ENCODE measurements at regions of chr9 and their contacts with region 1.

Region 1: DNA sequence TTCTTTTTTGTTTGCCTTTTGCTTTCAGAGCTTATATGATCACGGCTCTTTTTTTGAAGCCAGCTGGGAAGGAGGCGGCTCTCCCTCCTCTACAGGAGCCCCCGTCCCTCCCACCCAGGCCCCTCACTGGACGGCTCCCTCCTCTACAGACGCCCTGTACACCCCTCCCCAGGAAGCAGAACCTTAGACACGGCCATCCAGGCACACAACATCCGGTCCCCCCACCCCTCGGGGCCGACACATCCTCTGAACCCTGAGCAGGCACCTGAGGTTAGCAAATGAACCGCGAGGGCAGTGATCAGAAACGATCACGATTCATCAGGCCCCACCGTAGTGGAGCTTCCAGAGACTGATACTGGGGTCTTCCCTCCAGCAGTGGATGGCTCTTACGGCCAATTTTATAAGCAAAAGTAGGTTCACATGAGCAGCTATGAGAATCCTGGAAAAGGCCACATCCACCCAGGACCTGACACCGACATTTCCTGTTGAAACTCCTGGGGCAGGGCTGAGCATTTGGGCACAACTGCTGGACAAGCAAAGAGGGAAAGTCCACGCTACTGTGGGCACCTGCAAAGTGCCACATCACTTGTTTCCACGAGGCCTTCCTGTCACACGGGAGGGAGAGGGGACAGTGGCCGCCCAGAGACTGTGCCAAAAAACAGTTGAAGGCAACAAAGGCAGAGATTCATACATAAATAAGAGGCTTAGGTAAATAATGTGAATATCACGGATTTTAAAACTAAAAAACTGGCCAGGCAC is 78.9 kb downstream of the SEMA4D start:
- DNase-seq: peak; percentile 70
- ATAC-seq: peak; percentile 86
- H3K4me3 ChIP-seq: peak overlapping the region in 4 of 5 experiments; percentile 1 to 42 (median 8)
- H3K4me3 Mint-ChIP-seq: peak overlapping the region; percentile 85
- H3K27ac ChIP-seq: peak overlapping the region; percentile 64 to 65
- H3K27ac Mint-ChIP-seq: peak overlapping the region; percentile 92
- H3K4me1 ChIP-seq: peaks cover 44 to 56% of the 10 kb centered on the region in 2 donors
- H3K4me1 Mint-ChIP-seq: peaks cover 68% of the 10 kb centered on the region
- H3K27me3 ChIP-seq: no peaks in the 10 kb centered on the region
- H3K27me3 Mint-ChIP-seq: no peaks in the 10 kb centered on the region
- CTCF ChIP-seq: no peak

Region 2: DNA sequence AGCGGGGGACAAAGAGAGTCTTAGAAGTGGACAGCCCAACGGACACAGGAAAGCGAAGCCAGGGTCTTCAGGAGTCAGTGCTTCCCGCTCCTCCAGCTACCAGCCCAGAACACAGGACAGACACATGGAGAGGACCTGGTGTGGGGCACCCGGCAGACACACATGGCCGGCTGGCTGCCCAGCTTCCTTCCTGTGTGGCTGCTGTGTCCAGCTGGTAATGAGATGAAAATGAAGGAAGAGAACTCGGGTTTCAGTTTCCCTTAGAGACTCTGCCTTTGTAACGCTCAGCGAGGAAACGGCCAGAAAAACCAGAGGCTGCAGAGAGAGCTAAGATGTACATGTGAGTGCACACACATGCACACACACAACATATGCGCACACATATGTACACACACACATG is 13.2 kb before region 1 on chr9:
- CTCF ChIA-PET with region 1: interaction called, 11 read pairs
- POLR2A ChIA-PET with region 1: interaction called, 19 read pairs
- intact Hi-C with region 1: loop called (anchors 1 kb)
- DNase-seq: peak; percentile 63
- ATAC-seq: peak; percentile 35
- H3K4me3 ChIP-seq: peak overlapping the region; percentile 3 to 47 (median 29)
- H3K4me3 Mint-ChIP-seq: peak overlapping the region; percentile 84
- H3K27ac ChIP-seq: peak overlapping the region; percentile 62 to 79
- H3K27ac Mint-ChIP-seq: peak overlapping the region; percentile 95
- H3K4me1 ChIP-seq: peaks cover 77 to 86% of the 10 kb centered on the region in 2 donors
- H3K4me1 Mint-ChIP-seq: peaks cover 89% of the 10 kb centered on the region
- H3K27me3 ChIP-seq: no peaks in the 10 kb centered on the region
- H3K27me3 Mint-ChIP-seq: no peaks in the 10 kb centered on the region
- CTCF ChIP-seq: no peak